Sigmoid colon (tissue), 7 donors: ENCODE measurements at regions of chr13 and their contacts with region 1.

Region 1: DNA sequence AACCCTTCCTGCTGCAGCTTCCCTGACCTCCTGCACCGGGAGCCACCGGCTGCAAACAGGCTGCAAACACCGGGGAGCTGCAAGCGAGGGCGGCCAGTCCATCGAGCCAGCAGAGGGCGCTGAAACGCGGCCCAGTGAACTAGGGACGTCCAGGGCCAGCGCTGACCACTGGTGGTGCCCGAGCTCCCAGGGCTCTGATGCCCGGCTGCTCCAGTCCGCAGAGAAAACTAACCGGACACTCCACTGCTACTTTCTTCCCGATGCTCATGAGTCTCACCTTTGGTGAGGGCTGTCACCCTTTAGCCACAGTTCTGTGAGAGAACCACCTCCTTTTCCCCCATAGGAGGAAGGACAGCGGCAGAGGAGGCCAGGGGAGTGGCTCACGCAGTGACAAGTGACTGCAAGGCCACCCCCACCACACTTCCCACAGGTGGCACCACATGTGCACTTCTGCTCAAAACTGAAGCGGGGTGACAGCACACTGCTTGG is 82.8 kb upstream of the MTIF3 start:
- DNase-seq: peak; percentile 87
- H3K4me3 ChIP-seq: peak overlapping the region in 1 of 4 donors; percentile 16
- H3K27ac ChIP-seq: no peak overlapping the region
- H3K4me1 ChIP-seq: peaks cover 0 to 16% (median 10%) of the 10 kb centered on the region in 4 donors
- H3K27me3 ChIP-seq: no peaks in the 10 kb centered on the region
- CTCF ChIP-seq: peak; percentile 69 to 91 (median 84)
- EP300 ChIP-seq: no peak
- POLR2A ChIP-seq: no peak

Region 2: DNA sequence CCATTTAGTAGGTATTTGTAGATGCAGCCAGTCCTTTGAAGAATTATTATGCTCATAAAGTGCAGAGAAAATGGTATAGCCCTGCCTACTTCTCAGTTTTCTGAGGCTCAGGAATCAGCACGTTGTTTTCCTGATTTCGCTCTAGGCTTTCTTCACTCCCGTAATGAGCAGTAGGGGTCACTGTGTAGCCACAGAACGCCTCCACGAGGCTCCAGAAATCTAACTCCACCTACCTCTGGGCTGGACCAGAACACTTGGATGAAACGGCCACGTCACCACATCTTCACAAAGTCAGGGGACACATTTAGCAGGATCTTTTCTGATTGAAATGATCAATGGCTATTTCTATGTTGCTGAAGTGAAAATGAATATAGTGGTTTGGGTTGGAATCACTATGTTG is 158.5 kb before region 1 on chr13:
- intact Hi-C with region 1: loop called (anchors 5 kb)
- DNase-seq: peak; percentile 78
- H3K4me3 ChIP-seq: no peak overlapping the region
- H3K27ac ChIP-seq: no peak overlapping the region
- H3K4me1 ChIP-seq: peaks cover 0 to 10% (median 6%) of the 10 kb centered on the region in 4 donors
- H3K27me3 ChIP-seq: peaks cover 0 to 27% (median 0%) of the 10 kb centered on the region in 3 donors
- CTCF ChIP-seq: peak; percentile 50 to 74 (median 71)
- EP300 ChIP-seq: no peak
- POLR2A ChIP-seq: no peak

Region 3: DNA sequence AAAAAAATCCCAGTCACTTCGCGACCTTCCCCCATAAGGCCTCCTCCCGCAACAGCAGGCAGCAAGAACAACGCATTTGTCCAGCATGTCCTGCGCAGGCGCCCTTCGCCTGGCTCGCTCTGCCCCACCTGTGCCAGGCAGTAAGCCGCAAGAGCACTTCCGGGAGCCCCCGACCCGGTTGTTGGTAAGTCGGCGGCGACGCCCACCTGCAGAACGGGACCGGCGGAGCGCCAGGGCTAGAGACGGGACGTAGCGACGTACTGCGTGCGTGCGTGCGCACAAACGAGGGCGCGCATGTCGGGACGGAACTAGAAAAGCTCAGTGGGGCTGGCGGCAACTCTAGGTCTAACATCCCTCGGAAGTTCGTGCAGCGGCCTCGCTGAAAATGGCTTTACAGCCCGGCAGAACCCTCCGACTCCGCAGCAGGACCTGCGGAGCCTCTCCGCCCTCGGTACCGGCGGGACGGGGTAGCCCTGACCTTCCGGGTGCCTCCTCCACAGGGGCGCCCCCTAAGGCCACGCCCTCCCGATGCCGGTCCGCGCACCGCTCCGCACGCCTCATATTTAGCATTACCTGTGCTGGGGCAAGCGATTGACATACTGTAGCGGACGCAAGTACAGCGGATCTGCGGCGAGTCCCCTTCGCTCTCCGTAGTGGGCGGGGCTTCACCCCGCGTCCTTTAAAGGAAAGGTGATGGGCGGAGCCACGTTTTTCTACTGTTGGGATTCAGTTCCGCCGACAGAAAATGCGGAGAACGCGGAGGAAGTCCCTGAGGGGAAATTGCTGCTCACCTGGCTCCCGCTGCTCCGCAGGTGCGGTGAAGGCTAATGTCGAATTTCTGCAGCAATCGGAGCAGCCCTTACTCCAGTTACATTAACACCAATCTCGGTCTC is 83.0 kb before region 1 on chr13 and contains the start of gene MTIF3:
- intact Hi-C with region 1: no loop called
- DNase-seq: peak; percentile 96
- H3K4me3 ChIP-seq: peak within 1 kb of the TSS; percentile 68 to 98 (median 90)
- H3K27ac ChIP-seq: peak within 1 kb of the TSS; percentile 95 to 100 (median 98)
- H3K4me1 ChIP-seq: peaks cover 0 to 45% (median 28%) of the 10 kb centered on the region in 4 donors
- H3K27me3 ChIP-seq: no peaks in the 10 kb centered on the region
- CTCF ChIP-seq: peak in 1 of 4 experiments; percentile 32
- EP300 ChIP-seq: peak in 1 of 4 donors; percentile 16
- POLR2A ChIP-seq: peak; percentile 78 to 84
- total RNA-seq, gene MTIF3: 64.3 to 102 (median 74.4) TPM

Region 4: DNA sequence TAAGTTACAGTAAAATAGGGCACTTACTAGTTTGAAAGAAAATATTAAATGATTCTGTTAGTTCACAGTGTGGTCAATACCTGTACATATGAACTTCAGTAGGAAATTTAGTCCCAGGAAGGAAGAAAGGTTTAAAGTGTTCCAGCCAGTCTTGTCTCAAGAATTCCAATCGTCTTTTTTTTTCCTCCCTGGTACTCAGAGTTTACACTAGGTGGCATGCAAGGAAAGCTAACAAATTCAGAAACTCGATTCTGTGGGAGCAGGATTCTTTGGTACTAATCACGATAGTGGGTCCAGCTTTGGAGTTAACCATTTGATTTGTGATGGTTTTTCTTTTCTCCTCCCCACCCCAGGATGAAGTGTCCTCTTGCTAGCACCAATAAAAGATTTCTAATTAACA is 132.1 kb after region 1 on chr13:
- intact Hi-C with region 1: no loop called
- DNase-seq: no peak
- H3K4me3 ChIP-seq: no peak overlapping the region
- H3K27ac ChIP-seq: no peak overlapping the region
- H3K4me1 ChIP-seq: peaks cover 0 to 37% (median 11%) of the 10 kb centered on the region in 4 donors
- H3K27me3 ChIP-seq: no peaks in the 10 kb centered on the region
- CTCF ChIP-seq: no peak
- EP300 ChIP-seq: no peak
- POLR2A ChIP-seq: no peak